ENCODE measurements at regions of chr4 and their contacts with region 1.

Region 1: GRCh38 chr4:57163530-57164459 is 53.6 kb upstream of the IGFBP7 start:
- DNase-seq: peak; percentile 13
- ATAC-seq: peak; percentile 99
- H3K4me3 ChIP-seq: peak overlapping the region; percentile 69
- H3K27ac ChIP-seq: no peak overlapping the region
- H3K4me1 ChIP-seq: no peaks in the 10 kb centered on the region
- H3K27me3 ChIP-seq: no peaks in the 10 kb centered on the region; a peak in 1 of 4 replicates
- CTCF ChIP-seq: peak; percentile 75 to 97 (median 93)
- EP300 ChIP-seq: no peak
- POLR2A ChIP-seq: no peak
- RAD21 ChIP-seq: peak; percentile 74

Region 2: GRCh38 chr4:57153207-57153606 is 10.6 kb before region 1 on chr4:
- CTCF ChIA-PET with region 1: interaction called, 12 read pairs
- POLR2A ChIA-PET with region 1: no interaction called
- RAD21 ChIA-PET with region 1: no interaction called
- SMC1A ChIA-PET with region 1: interaction called, 3 read pairs
- in situ Hi-C with region 1: no loop called
- intact Hi-C with region 1: no loop called
- DNase-seq: no peak
- ATAC-seq: no peak
- H3K4me3 ChIP-seq: no peak overlapping the region
- H3K27ac ChIP-seq: no peak overlapping the region
- H3K4me1 ChIP-seq: no peaks in the 10 kb centered on the region
- H3K27me3 ChIP-seq: no peaks in the 10 kb centered on the region
- CTCF ChIP-seq: no peak
- EP300 ChIP-seq: no peak
- POLR2A ChIP-seq: no peak
- RAD21 ChIP-seq: no peak

Region 3: DNA sequence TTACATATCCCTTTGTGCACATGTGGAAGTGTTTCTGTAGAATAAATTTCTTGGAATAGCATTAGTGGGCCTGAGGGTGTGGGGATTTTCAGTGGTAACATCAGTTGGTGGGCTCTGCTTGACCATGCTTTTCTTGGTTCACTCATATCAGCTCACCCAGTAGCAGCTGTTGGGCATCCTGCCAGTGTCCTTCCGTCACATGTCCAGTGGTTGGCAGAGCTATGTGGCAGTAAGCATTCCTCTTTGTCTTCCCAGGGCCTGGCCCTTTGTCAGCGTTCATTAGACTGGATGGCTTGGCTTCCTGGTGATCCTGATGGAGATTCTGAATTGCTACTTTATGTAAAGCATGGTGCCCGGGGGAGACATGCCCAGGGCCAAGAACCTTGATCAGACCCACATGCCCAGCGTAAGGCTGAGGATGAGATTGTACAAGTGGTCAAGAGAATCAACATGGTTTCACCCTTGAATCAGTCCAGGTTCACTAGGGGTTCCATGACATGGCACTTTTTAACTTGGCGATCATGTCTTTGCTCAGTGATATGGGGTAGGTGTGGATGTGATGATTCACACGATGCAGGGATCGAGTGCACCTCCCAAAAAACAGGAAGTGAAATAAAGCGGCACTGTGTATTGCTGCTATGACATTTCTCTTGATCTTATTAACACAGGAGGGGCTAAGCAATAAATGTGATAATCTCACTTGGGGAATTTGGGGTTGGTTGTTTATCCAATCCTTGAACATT is 18.5 kb after region 1 on chr4:
- CTCF ChIA-PET with region 1: interaction called, 14 read pairs
- POLR2A ChIA-PET with region 1: no interaction called
- RAD21 ChIA-PET with region 1: no interaction called
- SMC1A ChIA-PET with region 1: interaction called, 4 read pairs
- in situ Hi-C with region 1: no loop called
- intact Hi-C with region 1: no loop called
- DNase-seq: no peak
- ATAC-seq: peak; percentile 38; the same call in 1 of the 3 replicates
- H3K4me3 ChIP-seq: no peak overlapping the region
- H3K27ac ChIP-seq: no peak overlapping the region
- H3K4me1 ChIP-seq: no peaks in the 10 kb centered on the region
- H3K27me3 ChIP-seq: no peaks in the 10 kb centered on the region; a peak in 1 of 4 replicates
- CTCF ChIP-seq: no peak
- EP300 ChIP-seq: no peak
- POLR2A ChIP-seq: no peak
- RAD21 ChIP-seq: no peak

Region 4: DNA sequence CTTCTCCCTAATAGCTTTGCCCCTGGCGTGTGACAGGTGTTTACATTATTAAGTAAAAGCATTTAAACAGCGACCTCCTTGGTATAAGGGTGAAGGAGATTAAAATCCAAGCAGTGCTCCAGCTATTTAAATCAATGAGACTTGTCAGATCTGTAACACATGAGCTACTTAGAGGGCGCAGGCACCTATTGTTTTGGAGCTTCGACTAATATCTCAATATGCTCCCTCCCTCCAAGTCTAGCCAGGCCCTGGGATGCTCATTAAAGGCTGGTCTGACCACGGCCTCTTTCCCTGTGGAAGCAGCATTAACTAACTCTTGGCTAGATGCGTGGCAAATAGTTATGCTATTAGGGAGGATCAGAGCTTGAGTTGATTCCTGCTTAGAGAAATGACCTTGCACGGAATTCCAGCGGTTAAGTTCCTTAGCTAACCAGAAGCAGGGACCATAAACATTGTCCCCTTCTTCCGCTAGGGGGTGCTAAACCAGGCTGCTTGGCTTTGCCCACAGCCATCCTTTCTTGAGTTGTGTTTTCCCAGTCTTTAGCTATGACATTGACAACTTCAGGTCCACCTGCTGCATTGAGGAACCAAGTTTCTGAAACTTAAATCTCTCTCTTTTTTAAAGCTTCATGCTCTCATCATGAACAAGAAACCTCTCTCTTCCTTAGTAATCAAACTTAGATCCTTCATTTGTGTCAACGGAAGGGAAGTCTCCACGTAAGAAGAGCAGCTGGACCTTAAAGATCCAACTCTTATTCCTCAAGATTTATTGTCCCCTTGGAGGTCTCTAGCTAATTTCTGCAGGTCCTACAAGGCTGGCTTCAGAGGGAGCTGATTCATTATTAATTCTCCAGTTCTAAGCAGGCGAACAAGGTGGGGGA is 27.0 kb after region 1 on chr4:
- CTCF ChIA-PET with region 1: interaction called, 21 read pairs
- POLR2A ChIA-PET with region 1: no interaction called
- RAD21 ChIA-PET with region 1: no interaction called
- SMC1A ChIA-PET with region 1: interaction called, 6 read pairs
- in situ Hi-C with region 1: no loop called
- intact Hi-C with region 1: no loop called
- DNase-seq: no peak
- ATAC-seq: peak; percentile 78
- H3K4me3 ChIP-seq: no peak overlapping the region
- H3K27ac ChIP-seq: no peak overlapping the region
- H3K4me1 ChIP-seq: no peaks in the 10 kb centered on the region
- H3K27me3 ChIP-seq: peaks cover 0 to 1% of the 10 kb centered on the region in 2 experiments; a peak in 2 of 4 replicates
- CTCF ChIP-seq: peak; percentile 44 to 83 (median 78)
- EP300 ChIP-seq: no peak
- POLR2A ChIP-seq: no peak
- RAD21 ChIP-seq: peak; percentile 35; the same call in 1 of the 2 replicates

Region 5: DNA sequence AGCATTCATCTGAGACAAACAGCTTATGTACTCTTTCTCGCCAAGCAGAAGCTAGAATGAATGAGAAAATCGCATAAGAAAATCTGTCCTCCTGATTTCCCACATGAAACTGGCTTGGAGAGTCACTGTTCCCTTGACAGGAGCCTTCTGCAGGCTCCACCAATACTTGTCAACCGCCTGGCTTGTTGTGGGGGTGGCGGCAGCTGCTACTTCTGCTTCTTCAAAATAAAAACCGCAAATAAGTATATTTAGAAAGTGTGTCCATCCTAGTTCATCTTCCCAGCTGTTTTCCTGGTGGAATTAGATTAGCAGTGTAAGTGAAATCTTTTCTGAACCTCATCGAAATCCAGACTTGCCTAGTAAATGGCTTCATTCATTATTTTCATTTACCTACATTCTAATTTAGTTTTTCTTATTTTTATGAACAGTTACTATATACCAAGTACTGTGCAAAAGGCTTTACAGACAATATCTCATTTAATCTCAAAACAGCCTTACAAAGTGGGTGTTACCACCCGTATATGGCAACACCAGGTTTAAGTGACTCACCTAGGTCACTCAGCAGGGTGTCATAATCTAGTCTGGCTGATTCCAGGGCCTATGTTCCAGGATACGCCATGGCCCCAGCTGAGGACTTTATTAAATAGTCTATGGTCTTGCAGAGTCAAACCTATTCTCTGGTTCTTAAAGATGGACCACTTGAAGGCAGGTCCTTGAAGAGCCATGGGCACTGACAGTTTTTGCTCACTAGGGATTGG is 51.0 kb after region 1 on chr4:
- CTCF ChIA-PET with region 1: interaction called, 15 read pairs
- POLR2A ChIA-PET with region 1: no interaction called
- RAD21 ChIA-PET with region 1: interaction called, 3 read pairs
- SMC1A ChIA-PET with region 1: interaction called, 6 read pairs
- in situ Hi-C with region 1: no loop called
- intact Hi-C with region 1: loop called (anchors 5 kb)
- DNase-seq: no peak
- ATAC-seq: no peak
- H3K4me3 ChIP-seq: no peak overlapping the region
- H3K27ac ChIP-seq: no peak overlapping the region
- H3K4me1 ChIP-seq: no peaks in the 10 kb centered on the region
- H3K27me3 ChIP-seq: peaks cover 0 to 3% of the 10 kb centered on the region in 2 experiments; a peak in 1 of 4 replicates
- CTCF ChIP-seq: no peak
- EP300 ChIP-seq: no peak
- POLR2A ChIP-seq: no peak
- RAD21 ChIP-seq: no peak

Region 6: GRCh38 chr4:57220172-57220571 is 56.4 kb after region 1 on chr4:
- CTCF ChIA-PET with region 1: interaction called, 15 read pairs
- POLR2A ChIA-PET with region 1: no interaction called
- RAD21 ChIA-PET with region 1: no interaction called
- SMC1A ChIA-PET with region 1: interaction called, 6 read pairs
- in situ Hi-C with region 1: no loop called
- intact Hi-C with region 1: no loop called
- DNase-seq: no peak
- ATAC-seq: peak; percentile 79
- H3K4me3 ChIP-seq: no peak overlapping the region
- H3K27ac ChIP-seq: no peak overlapping the region
- H3K4me1 ChIP-seq: no peaks in the 10 kb centered on the region
- H3K27me3 ChIP-seq: no peaks in the 10 kb centered on the region
- CTCF ChIP-seq: no peak
- EP300 ChIP-seq: no peak
- POLR2A ChIP-seq: no peak
- RAD21 ChIP-seq: no peak

Region 7: DNA sequence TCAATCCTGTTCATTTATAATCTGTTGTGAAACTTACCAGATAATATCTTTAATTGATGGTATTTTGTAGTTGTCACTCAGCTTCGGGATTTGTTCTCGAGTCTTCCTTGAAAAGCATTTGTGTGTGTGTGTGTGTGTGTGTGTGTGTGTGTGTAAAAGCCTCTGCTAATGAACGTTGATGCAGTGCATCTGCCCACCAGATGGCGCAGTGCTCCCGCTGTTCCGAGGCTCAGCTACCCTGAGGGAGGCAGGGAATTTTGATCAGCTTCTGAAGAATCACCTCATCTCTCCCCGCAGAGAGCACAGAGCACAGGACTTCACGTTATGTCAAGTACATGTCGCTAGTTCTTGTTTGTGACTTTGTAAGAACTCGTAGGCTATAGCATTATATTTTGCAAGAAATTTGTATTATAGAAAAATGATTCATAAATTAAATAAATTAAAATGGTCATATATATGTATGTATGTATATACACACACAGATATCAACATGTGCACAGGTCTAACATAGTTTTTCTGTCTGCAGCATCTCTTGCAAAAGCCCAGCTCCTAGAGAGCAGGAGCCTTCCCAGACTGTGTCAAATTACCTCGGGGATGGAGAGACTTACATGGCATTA is 263.1 kb after region 1 on chr4:
- CTCF ChIA-PET with region 1: interaction called, 11 read pairs
- POLR2A ChIA-PET with region 1: no interaction called
- RAD21 ChIA-PET with region 1: interaction called, 7 read pairs
- SMC1A ChIA-PET with region 1: no interaction called
- in situ Hi-C with region 1: loop called (anchors 10 kb)
- intact Hi-C with region 1: loop called (anchors 5 kb)
- DNase-seq: no peak
- ATAC-seq: peak; percentile 96
- H3K4me3 ChIP-seq: no peak overlapping the region
- H3K27ac ChIP-seq: no peak overlapping the region
- H3K4me1 ChIP-seq: no peaks in the 10 kb centered on the region
- H3K27me3 ChIP-seq: no peaks in the 10 kb centered on the region
- CTCF ChIP-seq: peak; percentile 74 to 85 (median 74)
- EP300 ChIP-seq: no peak
- POLR2A ChIP-seq: no peak
- RAD21 ChIP-seq: peak; percentile 77

Measured in GM12878 (cell line).